ENCODE measurements at regions of chr10 and their contacts with region 1.

Region 1: DNA sequence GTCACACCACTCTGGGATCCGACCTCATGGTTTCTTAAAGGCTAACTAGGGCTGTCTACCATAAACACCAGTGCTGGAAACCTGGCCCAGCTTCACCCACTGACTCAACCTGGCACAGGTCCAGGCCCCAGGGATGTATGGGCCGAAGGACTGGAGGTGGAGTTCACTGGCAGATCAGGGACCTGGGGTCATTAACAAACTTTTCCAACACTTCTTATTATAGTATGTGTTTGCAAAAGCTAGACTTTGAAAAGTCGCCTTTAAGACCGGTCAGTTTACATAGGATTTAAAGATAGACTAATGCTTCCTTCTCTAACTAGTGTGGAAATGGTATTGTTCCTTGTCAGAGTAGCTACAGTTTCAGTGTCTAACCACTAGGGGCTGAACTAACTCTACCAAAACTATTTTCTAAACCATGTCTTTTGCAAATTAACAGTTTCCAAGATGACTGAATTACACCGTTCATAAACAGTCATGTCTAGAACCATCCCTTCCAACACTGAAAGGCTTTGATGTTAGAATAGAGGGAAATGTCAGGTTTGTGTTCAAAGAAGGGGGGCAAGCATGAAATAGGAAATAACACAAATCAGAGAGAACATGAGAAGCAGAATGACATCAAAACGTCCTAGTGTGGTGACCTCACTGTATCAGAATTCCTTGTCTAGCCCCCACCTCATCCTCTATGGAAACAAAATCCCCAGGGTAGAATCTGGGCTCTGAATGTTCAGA is 29.7 kb downstream of the STN1 start:
- DNase-seq: peak; percentile 82
- H3K4me3 Mint-ChIP-seq: peak overlapping the region; percentile 12
- H3K27ac Mint-ChIP-seq: peak overlapping the region; percentile 85
- H3K4me1 Mint-ChIP-seq: peaks cover 27% of the 10 kb centered on the region
- H3K27me3 Mint-ChIP-seq: no peaks in the 10 kb centered on the region
- CTCF ChIP-seq: no peak

Region 2: DNA sequence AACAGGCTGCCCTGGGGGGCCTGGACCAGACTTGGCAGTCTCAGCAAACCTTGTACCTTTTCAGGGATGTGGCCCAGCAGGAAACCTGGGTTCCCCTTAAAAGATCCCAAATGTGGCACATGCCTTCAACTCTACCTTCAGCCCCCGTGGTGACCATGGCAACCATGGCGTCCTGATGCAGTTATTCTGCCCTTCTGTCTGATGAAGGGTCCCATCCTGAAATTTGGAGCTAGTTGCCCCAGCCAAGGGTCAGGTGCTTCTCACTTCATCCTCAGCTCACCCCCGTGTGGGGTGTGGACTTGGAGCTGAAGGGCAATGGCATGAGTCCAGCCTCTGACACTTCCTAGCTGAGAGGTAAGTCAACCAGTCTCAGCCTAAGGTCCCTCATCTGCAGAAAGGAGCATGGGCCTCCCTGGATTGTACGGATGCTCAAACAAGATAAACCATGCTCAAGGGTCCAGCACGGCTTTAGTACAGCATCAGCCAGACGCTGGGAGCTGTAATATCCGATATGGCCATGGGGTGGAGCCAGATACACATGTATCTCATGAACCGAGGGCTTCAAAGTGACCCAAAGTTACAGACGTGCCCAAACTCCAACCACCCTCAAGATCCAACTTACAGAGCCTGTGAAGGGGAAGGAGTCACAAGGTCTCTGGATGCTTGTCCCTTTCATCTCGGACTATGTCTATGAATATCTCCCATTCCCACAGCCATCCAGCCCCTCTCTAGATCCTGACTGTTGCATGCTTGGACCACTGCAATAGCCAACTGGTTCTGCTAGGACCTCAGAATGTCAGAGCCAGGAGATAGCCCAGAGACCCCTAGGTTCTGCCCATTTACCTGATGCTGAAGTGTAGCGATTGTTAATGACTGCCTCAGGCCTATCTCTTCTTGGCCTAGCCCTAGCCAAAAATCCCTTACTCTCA is 175.4 kb before region 1 on chr10:
- CTCF ChIA-PET with region 1: interaction called, 7 read pairs
- intact Hi-C with region 1: loop called (anchors 1 kb)
- DNase-seq: peak; percentile 80
- H3K4me3 Mint-ChIP-seq: no peak overlapping the region
- H3K27ac Mint-ChIP-seq: no peak overlapping the region
- H3K4me1 Mint-ChIP-seq: peaks cover 25% of the 10 kb centered on the region
- H3K27me3 Mint-ChIP-seq: peaks cover 7% of the 10 kb centered on the region
- CTCF ChIP-seq: peak; percentile 81

Region 3: DNA sequence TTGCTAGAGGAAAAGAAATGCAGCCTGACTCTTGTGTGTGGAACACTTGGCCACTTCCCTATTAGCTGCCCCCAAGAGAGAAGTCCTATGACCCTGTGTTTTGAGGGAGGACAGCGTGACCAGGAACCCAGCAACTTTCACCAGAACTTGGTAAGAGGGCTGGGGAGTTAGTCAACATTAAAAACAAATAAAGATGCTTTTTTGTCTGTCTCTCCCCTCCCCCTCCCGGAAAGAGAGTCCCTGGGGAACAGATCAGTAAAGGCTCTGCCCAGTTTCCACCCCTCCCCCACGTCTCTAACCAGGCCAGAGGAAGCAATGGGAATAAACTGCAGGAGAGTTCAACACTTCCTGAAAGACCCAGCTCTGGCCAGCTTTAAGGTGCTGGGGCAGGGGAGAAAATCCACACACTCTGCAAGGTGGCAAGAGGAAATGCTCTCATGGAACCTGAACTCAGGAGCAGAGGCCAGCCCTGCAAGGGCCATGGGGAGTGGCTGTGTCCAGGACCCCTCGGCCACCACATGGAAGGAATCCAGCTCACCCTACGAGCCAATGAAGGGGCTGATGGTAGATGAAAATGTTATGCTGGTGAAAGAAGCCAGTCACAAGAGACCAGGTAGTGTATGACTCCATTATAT is 54.4 kb before region 1 on chr10:
- CTCF ChIA-PET with region 1: no interaction called
- intact Hi-C with region 1: no loop called
- DNase-seq: no peak
- H3K4me3 Mint-ChIP-seq: no peak overlapping the region
- H3K27ac Mint-ChIP-seq: no peak overlapping the region
- H3K4me1 Mint-ChIP-seq: no peaks in the 10 kb centered on the region
- H3K27me3 Mint-ChIP-seq: peaks cover 24% of the 10 kb centered on the region
- CTCF ChIP-seq: no peak

Region 4: DNA sequence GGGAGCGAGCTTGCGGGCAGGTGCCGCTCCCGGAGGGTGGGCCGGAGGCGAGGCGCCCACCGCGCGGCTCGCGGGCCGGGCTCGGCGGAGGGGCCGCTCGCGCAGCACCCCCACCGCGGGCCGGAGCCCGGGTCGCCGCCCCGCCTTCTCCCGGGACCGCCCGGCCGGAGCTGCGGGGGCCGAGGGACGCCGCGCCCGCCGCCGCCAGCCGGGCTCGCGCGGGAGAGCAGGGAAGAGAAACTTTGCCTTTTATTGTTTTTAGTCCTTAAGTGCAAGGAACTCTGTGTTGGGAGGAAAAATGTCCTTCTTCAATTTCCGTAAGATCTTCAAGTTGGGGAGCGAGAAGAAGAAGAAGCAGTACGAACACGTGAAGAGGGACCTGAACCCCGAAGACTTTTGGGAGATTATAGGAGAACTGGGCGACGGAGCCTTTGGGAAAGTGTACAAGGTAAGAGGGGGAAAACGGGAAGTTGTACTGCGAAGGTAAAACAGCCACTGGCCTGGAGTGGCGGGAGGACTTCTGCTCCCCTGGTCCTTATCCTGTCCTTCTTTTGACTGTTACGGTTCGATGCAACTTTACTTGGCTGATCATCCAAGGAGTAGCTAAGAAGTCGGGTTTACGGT is 79.3 kb after region 1 on chr10:
- CTCF ChIA-PET with region 1: interaction called, 6 read pairs
- intact Hi-C with region 1: loop called (anchors 2 kb)
- DNase-seq: no peak
- H3K4me3 Mint-ChIP-seq: peak overlapping the region; percentile 93
- H3K27ac Mint-ChIP-seq: peak overlapping the region; percentile 86
- H3K4me1 Mint-ChIP-seq: peaks cover 6% of the 10 kb centered on the region
- H3K27me3 Mint-ChIP-seq: no peaks in the 10 kb centered on the region
- CTCF ChIP-seq: no peak

Region 5: GRCh38 chr10:104026762-104027161 is 138.5 kb after region 1 on chr10:
- CTCF ChIA-PET with region 1: interaction called, 4 read pairs
- intact Hi-C with region 1: loop called (anchors 2 kb)
- DNase-seq: no peak
- H3K4me3 Mint-ChIP-seq: no peak overlapping the region
- H3K27ac Mint-ChIP-seq: peak overlapping the region; percentile 42
- H3K4me1 Mint-ChIP-seq: peaks cover 15% of the 10 kb centered on the region
- H3K27me3 Mint-ChIP-seq: no peaks in the 10 kb centered on the region
- CTCF ChIP-seq: no peak

Region 6: GRCh38 chr10:104209575-104210198 is 321.4 kb after region 1 on chr10:
- CTCF ChIA-PET with region 1: interaction called, 3 read pairs
- intact Hi-C with region 1: loop called (anchors 5 kb)
- DNase-seq: peak; percentile 32
- H3K4me3 Mint-ChIP-seq: no peak overlapping the region
- H3K27ac Mint-ChIP-seq: no peak overlapping the region
- H3K4me1 Mint-ChIP-seq: no peaks in the 10 kb centered on the region
- H3K27me3 Mint-ChIP-seq: no peaks in the 10 kb centered on the region
- CTCF ChIP-seq: peak; percentile 26

Region 7: DNA sequence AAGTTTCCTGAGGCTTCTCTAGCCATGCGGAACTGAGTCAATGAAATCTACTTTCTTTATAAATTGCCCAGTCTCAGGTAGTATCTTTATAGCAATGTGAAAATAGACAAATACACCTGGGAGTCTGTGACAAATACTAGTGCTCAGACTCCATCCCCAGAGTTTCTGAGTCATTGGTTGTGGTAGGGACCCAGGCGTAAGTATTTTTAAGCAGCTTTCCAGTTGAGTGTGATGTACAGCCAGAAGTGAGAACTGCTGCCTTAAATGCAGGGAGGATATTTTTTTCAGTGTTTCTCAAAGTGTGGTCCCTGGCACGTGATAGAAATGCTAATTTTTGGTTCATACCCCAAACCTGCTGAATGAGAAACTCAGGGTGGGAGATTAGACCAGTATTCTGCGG is 874.5 kb after region 1 on chr10:
- CTCF ChIA-PET with region 1: no interaction called
- intact Hi-C with region 1: no loop called
- DNase-seq: no peak
- H3K4me3 Mint-ChIP-seq: no peak overlapping the region
- H3K27ac Mint-ChIP-seq: no peak overlapping the region
- H3K4me1 Mint-ChIP-seq: no peaks in the 10 kb centered on the region
- H3K27me3 Mint-ChIP-seq: peaks cover 63% of the 10 kb centered on the region
- CTCF ChIP-seq: no peak